Breast epithelium (tissue), 4 donors: ENCODE measurements at regions of chr20 and their contacts with region 1.

Region 1: DNA sequence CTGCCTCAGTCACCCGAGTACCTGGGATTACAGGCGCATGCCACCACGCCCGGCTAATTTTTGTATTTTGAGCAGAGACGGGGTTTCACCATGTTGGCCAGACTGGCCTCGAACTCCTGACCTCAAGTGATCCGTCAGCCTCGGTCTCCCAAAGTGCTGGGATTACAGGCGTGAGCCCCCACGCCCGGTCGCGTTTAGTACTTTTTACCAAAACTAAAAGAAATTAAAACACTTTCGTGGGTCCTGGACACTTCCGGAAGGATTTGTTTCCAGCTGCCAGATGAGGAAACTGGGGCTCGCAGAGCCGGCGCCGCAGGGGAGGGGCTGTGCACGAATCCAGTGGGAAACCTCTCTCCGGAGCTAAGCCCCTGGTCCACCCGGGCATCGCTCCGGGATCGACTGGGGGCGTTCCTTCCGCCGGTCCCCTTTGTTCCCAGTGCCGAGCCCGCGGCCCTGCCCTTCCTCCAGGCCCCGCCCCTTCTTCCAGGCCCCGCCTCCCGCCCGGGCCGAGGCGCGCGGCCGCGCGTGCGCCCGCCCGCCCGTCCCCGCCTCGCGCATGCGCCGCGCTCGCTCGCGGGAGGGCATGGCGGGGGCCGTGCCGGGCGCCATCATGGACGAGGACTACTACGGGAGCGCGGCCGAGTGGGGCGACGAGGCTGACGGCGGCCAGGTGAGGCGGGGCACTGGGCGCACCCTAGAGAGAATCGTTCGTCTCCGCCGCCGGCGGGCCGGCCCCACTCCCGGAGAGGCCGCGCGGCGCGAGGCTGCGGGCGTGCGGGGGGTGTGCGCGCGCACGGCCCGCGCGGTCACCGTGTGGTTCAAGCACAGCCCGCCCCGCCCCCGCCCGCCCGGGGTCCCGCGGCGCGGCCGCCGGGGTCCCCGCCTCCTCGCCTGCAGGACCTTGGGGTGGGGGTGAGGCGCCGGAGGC is at the start of gene NELFCD:
- DNase-seq: peak; percentile 76 to 84
- H3K4me3 ChIP-seq: peak within 1 kb of the TSS; percentile 66 to 79 (median 78)
- H3K27ac ChIP-seq: peak within 1 kb of the TSS; percentile 89 to 95
- H3K4me1 ChIP-seq: peaks cover 0 to 2% of the 10 kb centered on the region in 2 donors
- H3K27me3 ChIP-seq: no peaks in the 10 kb centered on the region
- CTCF ChIP-seq: no peak
- POLR2A ChIP-seq: no peak
- total RNA-seq, gene NELFCD: 50.1 to 78.7 (median 77.7) TPM

Region 2: GRCh38 chr20:58890518-58891085 is 90.4 kb before region 1 on chr20:
- intact Hi-C with region 1: loop called (anchors 10 kb)
- DNase-seq: peak; percentile 64 to 65
- H3K4me3 ChIP-seq: peak overlapping the region; percentile 81 to 96 (median 92)
- H3K27ac ChIP-seq: peak overlapping the region; percentile 99 to 100
- H3K4me1 ChIP-seq: peaks cover 10 to 22% of the 10 kb centered on the region in 2 donors
- H3K27me3 ChIP-seq: no peaks in the 10 kb centered on the region
- CTCF ChIP-seq: no peak
- POLR2A ChIP-seq: no peak

Region 3: GRCh38 chr20:59042796-59043660 is 62.1 kb after region 1 on chr20:
- intact Hi-C with region 1: loop called (anchors 5 kb)
- DNase-seq: peak; percentile 87 to 89
- H3K4me3 ChIP-seq: peak overlapping the region; percentile 71 to 90 (median 87)
- H3K27ac ChIP-seq: peak overlapping the region; percentile 90
- H3K4me1 ChIP-seq: peaks cover 0 to 4% of the 10 kb centered on the region in 2 donors
- H3K27me3 ChIP-seq: no peaks in the 10 kb centered on the region
- CTCF ChIP-seq: no peak
- POLR2A ChIP-seq: no peak

Region 4: GRCh38 chr20:59802471-59803221 is 821.7 kb after region 1 on chr20:
- intact Hi-C with region 1: no loop called
- DNase-seq: peak in 1 of 2 donors; percentile 39
- H3K4me3 ChIP-seq: no peak overlapping the region
- H3K27ac ChIP-seq: no peak overlapping the region
- H3K4me1 ChIP-seq: no peaks in the 10 kb centered on the region
- H3K27me3 ChIP-seq: peaks cover 0 to 17% of the 10 kb centered on the region in 2 donors
- CTCF ChIP-seq: no peak
- POLR2A ChIP-seq: no peak